ENCODE measurements at regions of chr17 and their contacts with region 1.

Region 1: DNA sequence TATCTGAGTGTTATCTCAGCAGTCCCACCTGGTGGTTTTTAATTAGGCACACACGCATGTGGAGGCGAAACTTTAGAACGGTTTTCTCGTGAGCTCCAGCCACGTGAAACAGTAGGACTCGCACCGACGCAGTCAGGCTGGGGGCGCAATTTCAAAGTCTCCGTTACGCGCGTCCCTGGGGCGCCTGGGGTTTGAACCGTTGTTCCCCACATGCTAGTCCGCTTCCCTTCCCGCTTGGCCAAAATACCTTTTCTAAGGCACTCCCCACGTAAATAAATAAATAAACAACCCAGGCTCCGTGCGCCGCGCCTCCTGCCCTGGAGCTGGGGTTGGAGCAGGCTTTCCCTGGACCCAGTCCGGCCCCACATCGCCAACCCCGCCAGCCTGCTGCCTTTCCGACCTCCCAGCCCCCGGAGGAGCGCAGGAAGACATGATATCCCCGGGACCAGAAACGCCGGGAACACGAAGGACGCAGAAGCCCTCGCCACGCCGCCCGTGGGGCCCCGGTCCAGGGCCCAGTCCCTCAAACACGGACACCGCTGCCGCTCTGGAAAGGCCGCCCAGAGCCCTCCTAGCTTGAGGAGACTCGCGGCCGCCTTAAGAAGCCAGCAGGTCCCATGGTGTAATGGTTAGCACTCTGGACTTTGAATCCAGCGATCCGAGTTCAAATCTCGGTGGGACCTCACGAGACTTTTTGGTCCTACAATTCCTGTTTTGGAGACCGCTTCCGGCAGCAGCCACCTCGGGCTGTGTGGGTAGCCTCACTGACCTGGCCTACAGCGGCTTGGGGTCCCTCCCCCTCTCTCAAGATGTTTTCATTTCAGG is 18.2 kb downstream of the GNGT2 start:
- DNase-seq: peak; percentile 75 to 87
- H3K4me3 ChIP-seq: peak overlapping the region; percentile 71
- H3K4me1 ChIP-seq: peaks cover 19% of the 10 kb centered on the region
- H3K27me3 ChIP-seq: no peaks in the 10 kb centered on the region

Region 2: GRCh38 chr17:48610282-48611211 is 581.6 kb before region 1 on chr17 and contains the start of gene HOXB7:
- in situ Hi-C with region 1: no loop called
- DNase-seq: no peak
- H3K4me3 ChIP-seq: no peak within 1 kb of the TSS
- H3K4me1 ChIP-seq: peaks cover 2% of the 10 kb centered on the region; the same call in 1 of the 2 replicates
- H3K27me3 ChIP-seq: peaks cover 19% of the 10 kb centered on the region

Region 3: GRCh38 chr17:49390548-49391324 is 198.6 kb after region 1 on chr17:
- in situ Hi-C with region 1: loop called (anchors 25 kb)
- DNase-seq: no peak
- H3K4me3 ChIP-seq: no peak overlapping the region
- H3K4me1 ChIP-seq: peaks cover 7% of the 10 kb centered on the region
- H3K27me3 ChIP-seq: no peaks in the 10 kb centered on the region

Region 4: DNA sequence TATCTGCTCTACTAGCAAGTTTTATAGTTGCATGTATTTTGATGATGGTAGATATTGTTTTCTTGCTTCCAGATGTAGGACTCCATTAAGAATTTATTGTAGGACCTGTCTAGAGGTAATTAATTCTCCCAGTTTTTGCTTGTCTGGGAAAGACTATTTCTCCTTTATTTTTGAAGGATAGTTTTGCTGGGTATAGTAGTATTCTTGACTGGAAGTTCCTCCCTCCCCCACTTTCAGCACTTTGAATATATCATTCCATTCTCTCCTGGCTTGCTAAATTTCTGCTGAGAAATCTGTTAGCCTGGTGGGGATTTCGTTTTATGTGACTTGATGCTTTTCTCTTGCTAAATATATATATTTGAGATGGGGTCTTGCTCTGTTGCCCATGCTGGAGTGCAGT is 230.6 kb after region 1 on chr17:
- in situ Hi-C with region 1: no loop called
- DNase-seq: no peak
- H3K4me3 ChIP-seq: no peak overlapping the region
- H3K4me1 ChIP-seq: no peaks in the 10 kb centered on the region
- H3K27me3 ChIP-seq: peaks cover 8% of the 10 kb centered on the region; the same call in 1 of the 2 replicates